ENCODE measurements at regions of chr7 and their contacts with region 1.

Region 1: GRCh38 chr7:20786779-20787659 is at the start of gene SP8:
- DNase-seq: peak; percentile 38
- H3K4me3 Mint-ChIP-seq: peak within 1 kb of the TSS; percentile 69
- H3K27ac Mint-ChIP-seq: no peak within 1 kb of the TSS
- H3K4me1 Mint-ChIP-seq: peaks cover 27% of the 10 kb centered on the region
- H3K27me3 Mint-ChIP-seq: peaks cover 75% of the 10 kb centered on the region
- total RNA-seq, gene SP8: 0.07 TPM in 1 of 2 experiments, not detected in the other

Region 2: DNA sequence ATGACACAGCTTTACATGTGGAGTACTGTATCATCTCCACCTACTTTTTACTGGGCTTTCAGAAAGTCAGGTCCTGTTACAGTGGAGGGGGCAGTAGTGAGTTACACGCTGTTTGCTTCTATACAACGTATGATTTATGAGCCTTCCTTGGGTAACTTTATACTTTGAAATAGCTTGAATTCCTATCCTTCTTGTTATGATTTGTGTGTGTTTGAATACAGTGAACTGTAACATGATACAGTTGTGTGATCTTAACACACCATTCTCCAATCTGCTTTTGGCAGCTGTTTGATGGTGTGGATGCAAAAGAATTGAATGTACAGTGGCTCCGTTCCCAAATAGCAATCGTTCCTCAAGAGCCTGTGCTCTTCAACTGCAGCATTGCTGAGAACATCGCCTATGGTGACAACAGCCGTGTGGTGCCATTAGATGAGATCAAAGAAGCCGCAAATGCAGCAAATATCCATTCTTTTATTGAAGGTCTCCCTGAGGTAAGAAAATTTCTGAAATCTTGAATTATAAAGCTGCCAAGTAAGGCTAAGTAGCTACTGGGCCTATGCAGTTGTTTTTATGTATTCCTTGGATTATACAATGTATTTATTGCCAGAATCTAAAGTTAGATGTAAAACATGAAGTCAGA is 42.0 kb before region 1 on chr7:
- CTCF ChIA-PET with region 1: no interaction called
- intact Hi-C with region 1: no loop called
- DNase-seq: no peak
- H3K4me3 Mint-ChIP-seq: no peak overlapping the region
- H3K27ac Mint-ChIP-seq: no peak overlapping the region
- H3K4me1 Mint-ChIP-seq: no peaks in the 10 kb centered on the region
- H3K27me3 Mint-ChIP-seq: peaks cover 14% of the 10 kb centered on the region

Region 3: DNA sequence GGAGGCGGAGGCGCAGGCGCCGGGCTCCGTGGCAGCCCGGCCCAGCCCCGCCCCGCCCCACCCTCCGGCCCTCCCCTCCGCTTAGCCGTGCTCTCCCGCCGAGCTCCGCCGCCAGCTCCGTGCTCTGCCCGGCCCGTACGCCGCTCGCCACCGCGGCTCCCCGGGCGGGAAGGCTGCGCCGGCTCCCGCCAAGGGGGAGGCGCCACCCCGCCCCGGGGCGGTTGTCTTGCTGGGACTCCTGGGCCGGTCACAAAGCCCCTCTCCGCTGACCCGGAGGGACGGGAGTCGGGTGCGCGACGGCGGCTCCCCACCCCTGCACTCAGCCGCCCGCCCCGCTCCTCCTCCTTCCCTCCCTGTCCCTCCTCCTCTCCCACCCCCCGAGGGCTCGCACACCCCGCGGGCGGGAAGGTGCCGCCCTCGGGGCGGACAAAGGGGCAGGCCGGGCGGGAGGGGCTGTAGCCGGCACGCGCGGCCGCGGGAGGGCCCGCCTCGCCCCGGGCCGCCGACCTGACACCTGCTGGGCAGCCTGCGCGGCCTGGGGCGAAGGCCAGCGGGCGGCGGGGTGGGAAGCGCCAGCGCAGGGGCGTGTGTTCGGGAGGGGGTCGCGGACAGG is 11.2 kb after region 1 on chr7:
- CTCF ChIA-PET with region 1: interaction called, 5 read pairs
- intact Hi-C with region 1: loop called (anchors 1 kb)
- DNase-seq: peak; percentile 13
- H3K4me3 Mint-ChIP-seq: peak overlapping the region; percentile 38
- H3K27ac Mint-ChIP-seq: no peak overlapping the region
- H3K4me1 Mint-ChIP-seq: peaks cover 15% of the 10 kb centered on the region
- H3K27me3 Mint-ChIP-seq: peaks cover 61% of the 10 kb centered on the region

Region 4: GRCh38 chr7:21507626-21508343 is 720.8 kb after region 1 on chr7:
- CTCF ChIA-PET with region 1: no interaction called
- intact Hi-C with region 1: loop called (anchors 10 kb)
- DNase-seq: peak; percentile 50
- H3K4me3 Mint-ChIP-seq: no peak overlapping the region
- H3K27ac Mint-ChIP-seq: no peak overlapping the region
- H3K4me1 Mint-ChIP-seq: no peaks in the 10 kb centered on the region
- H3K27me3 Mint-ChIP-seq: no peaks in the 10 kb centered on the region

Region 5: GRCh38 chr7:21542891-21543527 is 756.0 kb after region 1 on chr7 and contains the start of gene DNAH11:
- CTCF ChIA-PET with region 1: no interaction called
- intact Hi-C with region 1: loop called (anchors 10 kb)
- DNase-seq: peak; percentile 17
- H3K4me3 Mint-ChIP-seq: peak within 1 kb of the TSS; percentile 68
- H3K27ac Mint-ChIP-seq: no peak within 1 kb of the TSS
- H3K4me1 Mint-ChIP-seq: peaks cover 4% of the 10 kb centered on the region
- H3K27me3 Mint-ChIP-seq: peaks cover 44% of the 10 kb centered on the region
- total RNA-seq, gene DNAH11: 0.02 TPM

Region 6: DNA sequence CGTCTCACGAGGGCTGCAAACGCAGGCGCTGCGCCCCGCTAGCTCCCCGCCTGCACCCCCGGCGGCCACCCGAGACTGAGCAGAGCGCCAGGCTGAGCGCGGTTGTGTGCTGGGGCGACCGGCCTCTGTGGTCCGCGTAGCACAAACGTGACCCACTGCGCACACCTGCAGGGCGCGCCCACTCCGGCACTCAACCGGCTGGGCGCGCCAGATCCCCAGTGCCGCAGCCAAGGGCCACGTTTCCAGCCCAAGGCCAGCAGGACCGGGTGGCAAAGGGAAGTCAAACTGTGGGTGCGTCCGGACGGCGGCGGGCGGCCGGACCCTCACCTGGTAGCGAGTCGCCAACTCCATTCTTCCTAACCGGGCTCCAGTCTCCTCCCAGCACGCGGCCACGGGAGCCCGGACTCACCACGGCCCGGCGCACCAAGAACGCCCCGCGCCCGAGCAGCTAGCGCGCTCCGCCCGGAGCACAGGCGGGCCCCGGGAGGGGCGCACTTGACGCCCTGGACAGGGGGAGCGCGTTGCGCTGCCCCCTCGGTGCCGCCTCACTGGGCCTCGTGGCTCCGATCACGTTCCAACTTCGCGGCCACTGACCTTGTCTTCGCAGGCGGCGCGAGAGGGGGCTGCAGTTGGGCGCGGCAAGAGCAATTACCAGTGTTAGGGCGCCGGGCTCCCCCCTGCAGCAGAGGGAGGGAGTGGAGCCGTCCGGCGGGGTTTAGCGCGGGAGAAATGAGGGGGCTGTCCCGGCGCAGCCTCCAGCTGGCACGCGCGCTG is 1158.6 kb after region 1 on chr7 and contains the start of gene CDCA7L:
- CTCF ChIA-PET with region 1: no interaction called
- intact Hi-C with region 1: loop called (anchors 5 kb)
- DNase-seq: peak; percentile 85
- H3K4me3 Mint-ChIP-seq: peak within 1 kb of the TSS; percentile 86
- H3K27ac Mint-ChIP-seq: peak within 1 kb of the TSS; percentile 84
- H3K4me1 Mint-ChIP-seq: peaks cover 63% of the 10 kb centered on the region
- H3K27me3 Mint-ChIP-seq: no peaks in the 10 kb centered on the region
- total RNA-seq, gene CDCA7L: 101 to 103 TPM

Measured in activated naive CD4-positive, alpha-beta T cell treated with anti-CD3 and anti-CD28 coated beads for 36 hours (primary cell).